Mammary epithelial cell (primary cell): ENCODE measurements at regions of chr22 and their contacts with region 1.

Region 1: DNA sequence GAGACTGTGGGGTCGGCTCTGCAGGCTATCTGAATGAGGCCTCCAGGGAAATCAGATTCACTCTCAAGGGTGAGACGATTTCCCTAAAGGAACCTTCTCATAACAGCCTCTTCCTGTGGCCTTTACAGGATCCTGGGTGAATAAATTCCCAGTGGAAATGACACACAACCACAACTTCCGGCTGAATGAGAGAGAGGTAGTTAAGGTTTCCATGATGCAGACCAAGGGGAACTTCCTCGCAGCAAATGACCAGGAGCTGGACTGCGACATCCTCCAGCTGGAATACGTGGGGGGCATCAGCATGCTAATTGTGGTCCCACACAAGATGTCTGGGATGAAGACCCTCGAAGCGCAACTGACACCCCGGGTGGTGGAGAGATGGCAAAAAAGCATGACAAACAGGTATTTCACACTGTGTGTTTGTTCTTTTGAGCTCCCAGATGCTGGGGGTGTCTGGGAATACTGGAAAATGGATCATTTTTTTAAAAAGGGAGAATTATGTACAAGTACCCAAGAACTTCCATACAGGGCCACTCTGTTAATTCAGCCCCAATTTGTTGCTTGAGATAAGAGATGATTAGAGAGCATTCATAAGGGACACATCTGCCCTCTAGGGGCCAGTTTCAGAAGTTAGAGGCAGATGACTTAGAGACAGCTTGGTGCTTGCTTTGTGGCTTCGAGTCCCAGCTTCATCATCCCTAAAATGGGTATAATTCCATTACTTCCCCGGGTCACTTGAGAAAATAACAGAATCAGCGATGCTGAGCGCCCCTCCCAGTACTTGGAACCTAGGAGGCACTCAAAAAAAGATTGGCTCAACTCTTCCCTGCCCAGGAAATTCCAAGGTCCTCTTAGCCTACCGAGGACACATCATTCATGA is 10.2 kb downstream of the SERPIND1 start:
- DNase-seq: peak; percentile 35
- H3K4me3 ChIP-seq: no peak overlapping the region
- H3K27ac ChIP-seq: no peak overlapping the region
- H3K4me1 ChIP-seq: peaks cover 5% of the 10 kb centered on the region
- H3K27me3 ChIP-seq: no peaks in the 10 kb centered on the region
- CTCF ChIP-seq: peak; percentile 74 to 78

Region 2: DNA sequence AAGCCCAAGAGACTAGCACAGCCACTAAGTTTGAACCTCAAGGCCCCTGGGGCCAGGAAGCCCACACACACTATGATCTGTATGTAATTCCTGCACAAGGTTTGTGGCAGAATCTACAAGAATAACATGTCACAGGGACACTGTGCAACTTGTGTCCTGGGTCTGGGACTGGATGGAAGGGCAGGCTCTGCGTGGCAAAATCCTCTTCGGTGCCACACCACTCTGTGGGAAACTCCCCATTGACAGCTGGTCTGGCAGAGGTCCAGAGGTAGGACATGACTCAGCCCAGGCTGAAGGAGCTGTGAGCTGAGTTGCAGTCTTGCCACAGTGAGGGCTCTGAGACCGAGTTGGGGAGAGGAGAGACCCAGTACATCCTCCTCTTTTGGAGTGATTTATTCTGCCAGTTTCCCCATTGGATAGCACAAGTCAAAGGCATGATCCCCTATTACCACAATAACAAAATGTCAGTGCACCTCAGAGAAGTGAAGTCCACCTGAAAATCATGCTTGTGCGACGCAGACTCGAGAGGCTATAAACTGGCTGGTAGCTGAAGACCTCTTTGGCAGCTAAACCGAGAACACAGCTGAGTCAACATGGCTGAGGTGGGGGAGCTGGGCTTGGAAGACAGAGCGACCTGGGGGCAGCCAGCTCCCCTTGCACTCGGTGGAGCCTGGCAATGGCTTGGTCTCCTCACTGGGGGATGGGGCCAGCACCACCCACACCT is 33.5 kb before region 1 on chr22:
- CTCF ChIA-PET with region 1: no interaction called
- dilution Hi-C with region 1: no loop called
- in situ Hi-C with region 1: no loop called
- intact Hi-C with region 1: loop called (anchors 2 kb)
- DNase-seq: peak; percentile 82
- H3K4me3 ChIP-seq: no peak overlapping the region
- H3K27ac ChIP-seq: no peak overlapping the region
- H3K4me1 ChIP-seq: peaks cover 10% of the 10 kb centered on the region
- H3K27me3 ChIP-seq: no peaks in the 10 kb centered on the region
- CTCF ChIP-seq: no peak